Activated CD8-positive, alpha-beta T cell treated with anti-CD3 and anti-CD28 coated beads, Interleukin-2, amount 10 ng/mL, durations not matched to agents 7 days and 5 days (primary cell): ENCODE measurements at regions of chr17 and their contacts with region 1.

Region 1: GRCh38 chr17:32659419-32659842 is 172.6 kb downstream of the CDK5R1 start:
- DNase-seq: peak; percentile 77
- ATAC-seq: peak; percentile 63
- H3K4me3 Mint-ChIP-seq: no peak overlapping the region
- H3K27ac Mint-ChIP-seq: no peak overlapping the region
- H3K4me1 Mint-ChIP-seq: no peaks in the 10 kb centered on the region
- H3K27me3 Mint-ChIP-seq: peaks cover 9% of the 10 kb centered on the region

Region 2: GRCh38 chr17:32486111-32486700 is 173.2 kb before region 1 on chr17:
- CTCF ChIA-PET with region 1: interaction called, 20 read pairs
- POLR2A ChIA-PET with region 1: interaction called, 3 read pairs
- DNase-seq: peak; percentile 62
- ATAC-seq: peak; percentile 80
- H3K4me3 Mint-ChIP-seq: peak overlapping the region; percentile 62
- H3K27ac Mint-ChIP-seq: peak overlapping the region; percentile 39
- H3K4me1 Mint-ChIP-seq: peaks cover 42% of the 10 kb centered on the region
- H3K27me3 Mint-ChIP-seq: no peaks in the 10 kb centered on the region

Region 3: DNA sequence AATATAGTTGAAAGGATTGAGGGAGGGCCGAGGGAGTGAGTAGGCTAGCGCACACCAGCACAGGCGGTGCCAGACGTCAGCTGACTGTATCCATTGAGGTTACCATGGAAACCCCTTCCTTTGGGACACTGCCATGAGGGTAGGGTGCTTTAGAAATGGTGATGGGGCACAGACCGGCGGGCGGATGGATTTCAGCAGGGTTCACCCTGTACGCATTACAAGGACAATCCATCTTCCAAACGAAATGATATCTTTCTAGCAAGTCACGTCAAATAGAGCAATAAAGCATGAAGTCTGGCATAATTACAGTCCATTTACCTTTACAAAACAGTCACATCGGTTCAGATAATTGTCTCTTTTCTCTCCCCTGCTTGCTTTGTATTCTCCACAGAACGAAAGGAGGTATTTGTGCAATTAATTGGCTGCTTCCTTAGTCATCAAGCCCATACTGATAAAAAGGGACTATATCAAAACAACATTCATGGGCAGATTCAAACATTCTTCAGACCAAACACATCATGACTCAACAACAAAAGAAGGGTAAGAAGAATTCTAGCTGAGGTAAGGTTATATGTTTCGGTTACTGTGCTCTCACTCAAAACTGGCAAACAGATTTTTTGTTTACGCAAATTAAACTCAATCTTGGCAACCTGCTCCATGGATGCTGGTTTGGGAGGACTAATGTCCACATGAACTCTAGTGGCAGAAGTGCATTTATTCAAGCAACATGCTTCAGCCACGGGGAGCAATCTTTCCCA is 32.0 kb before region 1 on chr17:
- CTCF ChIA-PET with region 1: no interaction called
- POLR2A ChIA-PET with region 1: no interaction called
- DNase-seq: no peak
- ATAC-seq: no peak
- H3K4me3 Mint-ChIP-seq: no peak overlapping the region
- H3K27ac Mint-ChIP-seq: no peak overlapping the region
- H3K4me1 Mint-ChIP-seq: no peaks in the 10 kb centered on the region
- H3K27me3 Mint-ChIP-seq: no peaks in the 10 kb centered on the region

Region 4: GRCh38 chr17:32648450-32648849 is 11.0 kb before region 1 on chr17:
- CTCF ChIA-PET with region 1: interaction called, 43 read pairs
- POLR2A ChIA-PET with region 1: no interaction called
- DNase-seq: no peak
- ATAC-seq: no peak
- H3K4me3 Mint-ChIP-seq: no peak overlapping the region
- H3K27ac Mint-ChIP-seq: no peak overlapping the region
- H3K4me1 Mint-ChIP-seq: no peaks in the 10 kb centered on the region
- H3K27me3 Mint-ChIP-seq: peaks cover 5% of the 10 kb centered on the region

Region 5: DNA sequence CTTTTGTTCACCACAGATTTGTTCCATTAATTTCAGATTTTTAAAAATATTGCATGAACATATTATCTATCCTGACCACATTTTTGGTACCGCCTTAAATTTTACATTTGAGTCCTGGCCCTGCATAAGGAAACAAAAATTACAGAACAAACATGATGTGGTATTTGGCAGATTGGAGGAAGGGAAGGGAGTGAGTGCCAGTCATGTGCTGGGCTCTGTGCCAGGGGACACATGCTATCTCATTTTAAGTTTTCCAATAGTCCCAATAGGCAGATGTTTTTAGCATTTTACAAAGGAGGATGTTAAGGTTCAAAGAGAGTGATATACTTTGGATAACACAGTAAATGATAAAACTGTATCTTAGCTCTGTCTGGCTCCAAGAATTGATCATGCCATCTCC is 12.5 kb after region 1 on chr17:
- CTCF ChIA-PET with region 1: interaction called, 23 read pairs
- POLR2A ChIA-PET with region 1: no interaction called
- DNase-seq: no peak
- ATAC-seq: no peak
- H3K4me3 Mint-ChIP-seq: no peak overlapping the region
- H3K27ac Mint-ChIP-seq: no peak overlapping the region
- H3K4me1 Mint-ChIP-seq: peaks cover 2% of the 10 kb centered on the region
- H3K27me3 Mint-ChIP-seq: peaks cover 3% of the 10 kb centered on the region

Region 6: GRCh38 chr17:32684087-32684958 is 24.9 kb after region 1 on chr17:
- CTCF ChIA-PET with region 1: no interaction called
- POLR2A ChIA-PET with region 1: no interaction called
- DNase-seq: no peak
- ATAC-seq: no peak
- H3K4me3 Mint-ChIP-seq: no peak overlapping the region
- H3K27ac Mint-ChIP-seq: no peak overlapping the region
- H3K4me1 Mint-ChIP-seq: no peaks in the 10 kb centered on the region
- H3K27me3 Mint-ChIP-seq: peaks cover 2% of the 10 kb centered on the region

Region 7: GRCh38 chr17:32755045-32755805 is 95.8 kb after region 1 on chr17:
- CTCF ChIA-PET with region 1: interaction called, 17 read pairs
- POLR2A ChIA-PET with region 1: no interaction called
- DNase-seq: no peak
- ATAC-seq: peak; percentile 61
- H3K4me3 Mint-ChIP-seq: no peak overlapping the region
- H3K27ac Mint-ChIP-seq: no peak overlapping the region
- H3K4me1 Mint-ChIP-seq: peaks cover 9% of the 10 kb centered on the region
- H3K27me3 Mint-ChIP-seq: no peaks in the 10 kb centered on the region

Region 8: DNA sequence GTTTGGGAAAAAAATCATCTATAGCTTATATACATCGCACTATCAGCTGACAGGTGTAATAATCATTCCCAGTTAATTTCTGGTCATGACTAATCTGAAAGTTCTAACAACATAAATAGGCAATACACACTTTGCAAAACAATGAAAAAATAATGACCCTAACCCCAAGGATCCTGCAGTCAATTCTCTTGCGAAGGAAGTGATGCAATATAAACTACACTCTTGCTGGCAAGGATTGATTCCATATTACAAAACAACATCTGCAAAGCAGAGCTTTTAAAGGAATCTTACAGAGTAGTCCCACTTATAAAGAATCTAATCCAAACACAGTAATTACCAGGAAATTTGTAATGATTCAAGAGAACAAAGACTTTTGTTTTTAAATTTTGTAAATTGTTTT is 144.1 kb after region 1 on chr17:
- CTCF ChIA-PET with region 1: no interaction called
- POLR2A ChIA-PET with region 1: no interaction called
- DNase-seq: no peak
- ATAC-seq: no peak
- H3K4me3 Mint-ChIP-seq: no peak overlapping the region
- H3K27ac Mint-ChIP-seq: no peak overlapping the region
- H3K4me1 Mint-ChIP-seq: peaks cover 5% of the 10 kb centered on the region
- H3K27me3 Mint-ChIP-seq: peaks cover 6% of the 10 kb centered on the region

Region 9: GRCh38 chr17:32971171-32971570 is 311.7 kb after region 1 on chr17:
- CTCF ChIA-PET with region 1: no interaction called
- POLR2A ChIA-PET with region 1: no interaction called
- DNase-seq: peak; percentile 41
- ATAC-seq: no peak
- H3K4me3 Mint-ChIP-seq: no peak overlapping the region
- H3K27ac Mint-ChIP-seq: no peak overlapping the region
- H3K4me1 Mint-ChIP-seq: peaks cover 14% of the 10 kb centered on the region
- H3K27me3 Mint-ChIP-seq: peaks cover 5% of the 10 kb centered on the region